ENCODE measurements at regions of chr19 and their contacts with region 1.

Region 1: DNA sequence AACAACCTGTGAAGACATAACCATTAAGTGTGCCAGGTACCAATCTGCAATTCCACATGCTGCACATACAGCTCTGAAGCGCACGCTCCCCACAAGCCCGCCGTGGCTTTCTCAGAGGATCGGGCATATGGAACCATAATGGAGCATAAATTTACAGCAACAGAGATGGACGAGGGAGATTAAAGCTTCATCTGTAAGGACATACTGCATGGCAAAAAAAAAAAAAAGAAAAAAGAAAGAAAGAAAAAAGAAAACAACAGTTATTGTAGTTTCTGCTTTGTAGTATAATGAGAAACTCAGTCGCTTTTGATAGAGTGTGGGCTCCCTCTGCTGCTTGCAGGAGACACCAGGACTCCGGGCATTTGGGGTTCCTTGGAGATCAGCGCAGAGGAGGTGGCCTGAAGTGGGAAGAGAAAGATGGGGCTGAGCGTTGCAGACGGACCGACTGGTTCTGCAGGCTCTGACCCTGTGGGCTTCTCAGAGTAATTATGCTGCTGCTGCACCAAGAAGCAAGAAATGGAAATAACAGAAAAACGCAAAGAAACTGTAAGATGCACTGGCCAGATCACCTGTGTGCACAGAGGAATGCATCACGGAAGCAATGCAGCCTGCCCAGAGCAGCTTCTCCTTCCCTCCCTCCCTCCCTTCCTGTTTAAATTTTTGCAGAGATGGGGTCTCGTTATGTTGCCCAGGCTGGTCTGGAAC is 10.8 kb upstream of the PDCD5 start:
- DNase-seq: peak in 1 of 2 donors; percentile 9
- ATAC-seq: peak in 2 of 4 donors; percentile 51 to 70
- H3K4me3 ChIP-seq: no peak overlapping the region
- H3K27ac ChIP-seq: no peak overlapping the region
- H3K4me1 ChIP-seq: no peaks in the 10 kb centered on the region
- H3K27me3 ChIP-seq: peaks cover 0 to 15% (median 6%) of the 10 kb centered on the region in 3 donors
- CTCF ChIP-seq: peak; percentile 50

Region 2: GRCh38 chr19:32287811-32288227 is 282.4 kb before region 1 on chr19:
- intact Hi-C with region 1: loop called in 1 of 2 experiments (anchors 10 kb)
- DNase-seq: peak; percentile 67 to 84
- ATAC-seq: peak in 3 of 4 donors; percentile 54 to 65 (median 56)
- H3K4me3 ChIP-seq: no peak overlapping the region
- H3K27ac ChIP-seq: no peak overlapping the region
- H3K4me1 ChIP-seq: no peaks in the 10 kb centered on the region
- H3K27me3 ChIP-seq: no peaks in the 10 kb centered on the region
- CTCF ChIP-seq: peak; percentile 29

Region 3: DNA sequence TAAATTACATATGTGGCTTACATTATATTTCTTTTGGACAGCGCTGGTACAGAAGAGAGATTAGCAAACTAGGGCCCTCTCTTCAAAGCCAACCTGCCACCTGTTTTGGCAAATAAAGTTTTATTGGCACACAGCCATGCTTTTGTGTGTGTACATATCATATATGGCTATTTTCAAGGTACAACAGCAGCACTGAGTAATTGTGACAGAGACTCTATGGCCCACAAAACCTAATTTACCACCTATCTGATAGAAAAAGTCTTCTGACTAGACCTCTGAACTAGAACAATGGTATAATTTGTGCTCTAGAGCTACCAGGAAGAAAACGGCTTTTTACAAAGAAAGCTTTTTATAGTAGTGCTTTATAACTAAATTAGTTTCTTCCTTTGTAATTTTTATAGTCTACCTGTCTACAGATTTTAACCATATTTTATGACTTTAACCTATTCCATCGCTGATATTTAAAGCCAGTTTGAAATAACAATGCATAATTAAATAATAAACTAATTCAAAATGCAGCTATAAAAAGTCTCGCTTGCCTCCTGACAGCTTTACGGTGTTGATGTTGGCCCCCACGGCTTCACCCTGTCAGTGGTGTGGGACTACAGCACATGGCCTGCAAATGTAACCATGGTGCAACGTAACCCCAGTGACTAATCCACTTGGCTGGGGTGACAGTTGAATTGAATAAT is 182.4 kb before region 1 on chr19:
- intact Hi-C with region 1: no loop called
- DNase-seq: no peak
- ATAC-seq: peak in 2 of 4 donors; percentile 63 to 69
- H3K4me3 ChIP-seq: no peak overlapping the region
- H3K27ac ChIP-seq: no peak overlapping the region
- H3K4me1 ChIP-seq: no peaks in the 10 kb centered on the region
- H3K27me3 ChIP-seq: no peaks in the 10 kb centered on the region
- CTCF ChIP-seq: no peak

Measured in psoas muscle (tissue), 8 donors.